Gastrocnemius medialis (tissue), 4 donors: ENCODE measurements at regions of chr7 and their contacts with region 1.

Region 1: GRCh38 chr7:41503438-41503837 is 199.5 kb downstream of the INHBA start:
- DNase-seq: no peak
- ATAC-seq: no peak
- H3K4me3 ChIP-seq: no peak overlapping the region
- H3K27ac ChIP-seq: no peak overlapping the region
- H3K4me1 ChIP-seq: no peaks in the 10 kb centered on the region
- H3K27me3 ChIP-seq: no peaks in the 10 kb centered on the region
- CTCF ChIP-seq: no peak
- POLR2A ChIP-seq: no peak

Region 2: DNA sequence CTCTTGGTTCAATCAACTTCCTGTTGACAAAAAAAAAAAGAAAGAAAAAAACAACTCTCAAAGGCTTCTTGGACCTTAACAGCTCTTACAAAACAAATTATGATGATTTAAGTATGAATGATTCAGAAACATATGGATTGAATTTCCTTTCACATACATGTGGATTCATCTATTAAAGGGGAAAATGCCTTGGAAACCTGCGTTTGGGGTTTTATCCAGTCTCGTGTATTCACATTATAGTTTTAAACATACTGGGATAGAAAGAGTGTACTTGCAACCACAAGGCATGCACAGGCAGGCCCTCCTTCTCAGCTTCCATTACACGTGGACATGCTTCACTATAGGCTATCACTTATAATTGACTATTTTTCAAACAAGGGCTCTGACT is 87.2 kb before region 1 on chr7:
- in situ Hi-C with region 1: loop called in 1 of 4 experiments (anchors 25 kb)
- intact Hi-C with region 1: no loop called
- DNase-seq: no peak
- ATAC-seq: no peak
- H3K4me3 ChIP-seq: no peak overlapping the region
- H3K27ac ChIP-seq: no peak overlapping the region
- H3K4me1 ChIP-seq: no peaks in the 10 kb centered on the region
- H3K27me3 ChIP-seq: no peaks in the 10 kb centered on the region
- CTCF ChIP-seq: no peak
- POLR2A ChIP-seq: no peak